ENCODE measurements at regions of chr4 and their contacts with region 1.

Region 1: DNA sequence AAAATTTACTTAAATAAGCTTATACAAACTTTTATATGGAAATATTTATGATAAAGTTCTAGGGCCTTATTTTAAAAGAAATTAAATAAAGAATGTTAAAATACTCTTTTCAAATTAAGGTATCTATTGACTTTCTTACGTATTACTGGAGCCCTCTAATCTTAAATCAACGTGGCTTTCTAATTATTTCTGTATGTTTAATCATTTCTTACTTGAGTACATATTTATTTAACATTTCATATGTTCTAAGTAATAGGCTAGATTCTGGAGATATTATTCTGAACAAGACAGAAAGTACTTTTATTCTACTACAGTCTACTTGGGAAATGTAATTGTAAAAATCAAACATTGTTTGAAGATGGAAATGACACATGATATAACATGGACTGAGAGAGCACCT is 1874.9 kb downstream of the STIM2 start:
- DNase-seq: no peak
- ATAC-seq: no peak
- H3K4me3 ChIP-seq: no peak overlapping the region
- H3K27ac ChIP-seq: no peak overlapping the region
- H3K4me1 ChIP-seq: no peaks in the 10 kb centered on the region
- H3K27me3 ChIP-seq: no peaks in the 10 kb centered on the region
- CTCF ChIP-seq: no peak
- POLR2A ChIP-seq: no peak
- RAD21 ChIP-seq: no peak

Region 2: GRCh38 chr4:28482580-28483270 is 252.8 kb before region 1 on chr4:
- CTCF ChIA-PET with region 1: no interaction called
- POLR2A ChIA-PET with region 1: interaction called, 11 read pairs
- dilution Hi-C with region 1: no loop called
- in situ Hi-C with region 1: no loop called
- intact Hi-C with region 1: no loop called
- DNase-seq: no peak
- ATAC-seq: no peak
- H3K4me3 ChIP-seq: no peak overlapping the region
- H3K27ac ChIP-seq: no peak overlapping the region
- H3K4me1 ChIP-seq: no peaks in the 10 kb centered on the region
- H3K27me3 ChIP-seq: no peaks in the 10 kb centered on the region
- CTCF ChIP-seq: no peak
- POLR2A ChIP-seq: no peak
- RAD21 ChIP-seq: no peak

Region 3: GRCh38 chr4:28724239-28724638 is 11.3 kb before region 1 on chr4:
- CTCF ChIA-PET with region 1: interaction called, 11 read pairs
- POLR2A ChIA-PET with region 1: no interaction called
- dilution Hi-C with region 1: no loop called
- in situ Hi-C with region 1: no loop called
- intact Hi-C with region 1: no loop called
- DNase-seq: no peak
- ATAC-seq: no peak
- H3K4me3 ChIP-seq: no peak overlapping the region
- H3K27ac ChIP-seq: no peak overlapping the region
- H3K4me1 ChIP-seq: no peaks in the 10 kb centered on the region
- H3K27me3 ChIP-seq: no peaks in the 10 kb centered on the region
- CTCF ChIP-seq: no peak
- POLR2A ChIP-seq: no peak
- RAD21 ChIP-seq: no peak

Region 4: DNA sequence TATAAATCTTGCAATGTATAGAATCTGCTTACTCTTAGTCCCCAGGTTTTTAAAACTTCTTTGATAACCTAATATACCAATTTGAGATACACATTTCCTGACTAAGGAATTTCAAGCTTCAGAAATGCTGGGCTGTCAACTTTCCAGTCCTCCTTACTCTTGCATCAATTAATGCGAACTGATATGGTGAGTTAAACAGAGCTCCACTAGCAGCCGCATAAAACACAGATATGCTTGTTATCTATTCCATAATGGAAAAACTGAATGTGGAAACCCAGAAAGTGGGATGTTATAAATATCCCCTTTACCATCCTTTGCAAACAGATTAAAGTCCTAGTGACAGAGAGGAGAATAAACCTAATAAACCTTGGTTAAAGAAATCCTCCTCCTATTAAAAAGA is 38.8 kb after region 1 on chr4:
- CTCF ChIA-PET with region 1: no interaction called
- POLR2A ChIA-PET with region 1: no interaction called
- dilution Hi-C with region 1: no loop called
- in situ Hi-C with region 1: no loop called
- intact Hi-C with region 1: no loop called
- DNase-seq: no peak
- ATAC-seq: no peak
- H3K4me3 ChIP-seq: no peak overlapping the region
- H3K27ac ChIP-seq: no peak overlapping the region
- H3K4me1 ChIP-seq: 0 out of 2 replicates have a peak, but pooled peaks cover 2% of the 10 kb centered on the region
- H3K27me3 ChIP-seq: no peaks in the 10 kb centered on the region
- CTCF ChIP-seq: no peak
- POLR2A ChIP-seq: no peak
- RAD21 ChIP-seq: no peak

Measured in IMR-90 (cell line).